Cardiac septum (tissue), 1 donor: ENCODE measurements at regions of chr5 and their contacts with region 1.

Region 1: GRCh38 chr5:180860887-180861822 is at the start of gene ZFP62:
- DNase-seq: peak; percentile 95
- total RNA-seq, gene ZFP62: 19.4 TPM

Region 2: DNA sequence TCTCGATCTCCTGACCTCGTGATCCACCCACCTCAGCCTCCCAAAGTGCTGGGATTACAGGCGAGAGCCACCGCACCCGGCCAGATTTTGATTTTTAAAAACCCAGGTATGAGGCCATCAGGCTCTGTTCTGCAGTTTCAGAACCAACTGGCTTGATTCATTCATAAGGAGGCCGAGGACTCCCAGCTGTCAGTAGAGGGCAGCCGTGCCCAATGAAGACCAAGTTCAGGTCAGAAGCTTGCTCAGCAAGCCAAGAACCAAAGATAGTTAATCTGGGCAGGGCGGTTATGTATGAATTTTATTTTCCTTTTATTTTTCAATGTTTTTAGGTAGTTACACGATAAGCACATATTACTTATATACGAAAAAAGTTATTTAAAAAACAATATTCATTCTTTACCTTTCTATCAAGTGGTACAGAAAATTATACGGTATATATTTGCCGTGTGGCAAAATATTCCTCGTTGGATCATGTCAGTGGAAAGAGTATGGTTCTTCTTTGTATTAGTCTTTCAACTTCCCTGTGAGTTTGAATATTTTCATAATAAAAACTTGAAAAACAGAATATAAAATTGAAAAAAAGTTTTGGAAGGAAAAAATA is 76.6 kb before region 1 on chr5:
- intact Hi-C with region 1: loop called (anchors 5 kb)
- DNase-seq: peak; percentile 88

Region 3: DNA sequence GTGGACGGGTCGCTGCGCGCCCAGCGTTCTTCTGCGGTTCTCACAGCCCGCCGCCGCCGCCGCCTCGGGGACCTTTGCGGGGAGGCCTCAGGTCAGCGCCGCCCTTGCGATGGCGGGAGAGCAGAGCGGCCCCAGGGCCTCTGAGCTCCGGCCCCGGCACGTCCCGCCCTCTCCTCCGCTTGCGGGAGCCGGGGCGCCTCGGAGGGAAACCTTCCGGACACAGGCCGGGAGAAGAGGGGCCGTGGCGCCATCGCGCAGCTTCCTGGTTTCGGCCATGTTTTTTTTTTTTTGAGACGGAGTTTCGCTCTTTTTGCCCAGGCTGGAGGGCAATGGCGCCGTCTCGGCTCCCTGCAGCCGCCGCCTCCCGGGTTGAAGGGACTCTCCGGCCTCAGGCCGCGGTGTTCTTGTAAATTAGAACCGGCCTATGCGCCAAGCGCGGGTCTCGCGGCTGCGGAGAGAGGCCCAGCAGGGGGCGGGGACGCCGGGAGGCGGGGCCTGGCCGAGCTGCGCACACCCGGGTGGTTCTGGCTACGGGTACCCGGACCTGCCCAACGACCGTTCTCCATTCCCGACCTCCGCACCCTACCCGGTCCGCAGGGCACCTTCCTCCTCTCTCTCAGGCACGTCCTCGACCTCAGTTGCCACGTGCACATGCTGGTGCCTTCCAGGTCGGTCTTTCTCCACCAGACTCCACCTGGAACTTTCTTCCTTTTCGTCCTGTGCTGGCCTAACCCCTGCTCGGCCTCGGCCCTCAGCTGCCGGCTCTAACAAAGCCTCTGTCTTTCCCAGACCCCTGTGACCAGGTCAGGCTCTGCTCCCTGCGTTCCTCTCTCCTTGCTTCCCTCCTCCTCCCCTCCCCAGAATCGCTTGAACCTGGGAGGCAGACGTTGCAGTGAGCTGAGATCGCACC is 29.8 kb before region 1 on chr5:
- intact Hi-C with region 1: loop called (anchors 2 kb)
- DNase-seq: peak; percentile 97

Region 4: DNA sequence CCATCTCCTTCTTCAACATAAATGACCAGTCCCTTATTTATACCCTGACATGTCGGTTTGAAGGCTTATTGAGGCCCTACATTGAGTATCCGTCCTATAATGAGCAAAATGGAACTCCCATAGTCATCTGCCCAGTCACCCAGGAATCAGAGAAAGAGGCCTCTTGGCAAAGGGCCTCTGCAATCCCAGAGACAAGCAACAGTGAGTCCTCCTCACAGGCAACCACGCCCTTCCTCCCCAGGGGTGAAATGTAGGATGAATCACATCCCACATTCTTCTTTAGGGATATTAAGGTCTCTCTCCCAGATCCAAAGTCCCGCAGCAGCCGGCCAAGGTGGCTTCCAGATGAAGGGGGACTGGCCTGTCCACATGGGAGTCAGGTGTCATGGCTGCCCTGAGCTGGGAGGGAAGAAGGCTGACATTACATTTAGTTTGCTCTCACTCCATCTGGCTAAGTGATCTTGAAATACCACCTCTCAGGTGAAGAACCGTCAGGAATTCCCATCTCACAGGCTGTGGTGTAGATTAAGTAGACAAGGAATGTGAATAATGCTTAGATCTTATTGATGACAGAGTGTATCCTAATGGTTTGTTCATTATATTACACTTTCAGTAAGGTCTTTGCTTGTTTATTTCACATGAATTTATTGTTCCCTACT is 89.3 kb after region 1 on chr5:
- intact Hi-C with region 1: no loop called
- DNase-seq: no peak